Upper lobe of right lung (tissue), 1 donor: ENCODE measurements at regions of chr4 and their contacts with region 1.

Region 1: DNA sequence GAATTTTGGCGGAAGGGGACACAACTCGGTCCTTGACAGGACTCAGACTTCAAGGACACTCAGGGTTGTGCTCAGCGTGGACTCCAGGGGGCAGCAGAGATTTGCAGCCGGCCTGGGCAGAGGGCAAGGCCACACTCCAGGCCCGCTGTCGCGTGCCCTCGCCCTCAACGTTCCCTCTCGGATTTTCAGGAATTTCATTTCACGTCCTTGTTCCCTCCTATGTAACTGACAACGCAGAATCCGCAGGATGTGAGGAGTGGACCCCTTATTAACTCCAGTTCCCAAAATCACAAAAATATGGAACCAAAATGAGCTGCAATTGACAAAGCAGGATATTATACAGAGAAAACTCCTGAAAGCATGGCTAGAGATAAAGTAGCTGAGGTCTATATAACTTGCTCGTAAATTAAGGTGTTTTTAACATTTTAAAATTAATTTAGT is 21.0 kb upstream of the DCTD start:
- DNase-seq: peak; percentile 89
- ATAC-seq: peak; percentile 99
- H3K4me3 ChIP-seq: no peak overlapping the region
- H3K27ac ChIP-seq: no peak overlapping the region
- H3K4me1 ChIP-seq: no peaks in the 10 kb centered on the region
- H3K27me3 ChIP-seq: no peaks in the 10 kb centered on the region
- CTCF ChIP-seq: peak; percentile 90

Region 2: GRCh38 chr4:181933471-181933870 is 1004.8 kb before region 1 on chr4:
- intact Hi-C with region 1: no loop called
- DNase-seq: no peak
- ATAC-seq: no peak
- H3K4me3 ChIP-seq: no peak overlapping the region
- H3K27ac ChIP-seq: no peak overlapping the region
- H3K4me1 ChIP-seq: no peaks in the 10 kb centered on the region
- H3K27me3 ChIP-seq: no peaks in the 10 kb centered on the region
- CTCF ChIP-seq: no peak

Region 3: DNA sequence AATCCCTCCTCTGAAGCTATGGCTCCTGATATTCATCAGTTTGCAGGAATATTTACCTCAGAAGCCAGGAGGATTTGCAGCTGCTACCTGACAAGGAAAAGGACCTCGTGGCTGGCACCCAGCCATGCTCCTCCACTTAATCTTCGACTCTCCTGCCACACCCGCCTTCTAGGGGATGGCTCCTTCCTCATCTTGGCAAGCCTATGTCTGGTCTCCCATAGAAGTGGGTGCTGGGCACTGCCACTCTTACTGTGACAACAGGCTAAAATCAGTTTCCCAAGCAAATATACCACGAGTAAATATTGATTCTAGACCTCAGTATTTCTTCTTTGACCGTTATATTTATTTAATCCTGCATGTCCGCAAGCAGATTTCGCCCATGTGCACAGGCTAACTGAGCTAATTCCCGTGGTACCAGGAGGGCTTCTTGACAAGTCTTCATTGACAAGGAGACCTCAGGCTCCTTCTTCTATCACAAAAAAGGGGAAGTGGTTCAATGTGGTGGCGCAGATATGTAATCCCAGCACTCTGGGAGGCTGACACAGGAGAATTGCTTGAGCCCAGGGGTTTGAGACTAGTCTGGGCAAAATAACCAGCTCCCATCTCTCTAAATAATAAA is 31.5 kb after region 1 on chr4:
- intact Hi-C with region 1: no loop called
- DNase-seq: no peak
- ATAC-seq: no peak
- H3K4me3 ChIP-seq: no peak overlapping the region
- H3K27ac ChIP-seq: no peak overlapping the region
- H3K4me1 ChIP-seq: no peaks in the 10 kb centered on the region
- H3K27me3 ChIP-seq: no peaks in the 10 kb centered on the region
- CTCF ChIP-seq: no peak

Region 4: GRCh38 chr4:183059797-183060196 is 121.6 kb after region 1 on chr4:
- intact Hi-C with region 1: loop called (anchors 10 kb)
- DNase-seq: no peak
- ATAC-seq: no peak
- H3K4me3 ChIP-seq: no peak overlapping the region
- H3K27ac ChIP-seq: no peak overlapping the region
- H3K4me1 ChIP-seq: no peaks in the 10 kb centered on the region
- H3K27me3 ChIP-seq: no peaks in the 10 kb centered on the region
- CTCF ChIP-seq: no peak

Region 5: DNA sequence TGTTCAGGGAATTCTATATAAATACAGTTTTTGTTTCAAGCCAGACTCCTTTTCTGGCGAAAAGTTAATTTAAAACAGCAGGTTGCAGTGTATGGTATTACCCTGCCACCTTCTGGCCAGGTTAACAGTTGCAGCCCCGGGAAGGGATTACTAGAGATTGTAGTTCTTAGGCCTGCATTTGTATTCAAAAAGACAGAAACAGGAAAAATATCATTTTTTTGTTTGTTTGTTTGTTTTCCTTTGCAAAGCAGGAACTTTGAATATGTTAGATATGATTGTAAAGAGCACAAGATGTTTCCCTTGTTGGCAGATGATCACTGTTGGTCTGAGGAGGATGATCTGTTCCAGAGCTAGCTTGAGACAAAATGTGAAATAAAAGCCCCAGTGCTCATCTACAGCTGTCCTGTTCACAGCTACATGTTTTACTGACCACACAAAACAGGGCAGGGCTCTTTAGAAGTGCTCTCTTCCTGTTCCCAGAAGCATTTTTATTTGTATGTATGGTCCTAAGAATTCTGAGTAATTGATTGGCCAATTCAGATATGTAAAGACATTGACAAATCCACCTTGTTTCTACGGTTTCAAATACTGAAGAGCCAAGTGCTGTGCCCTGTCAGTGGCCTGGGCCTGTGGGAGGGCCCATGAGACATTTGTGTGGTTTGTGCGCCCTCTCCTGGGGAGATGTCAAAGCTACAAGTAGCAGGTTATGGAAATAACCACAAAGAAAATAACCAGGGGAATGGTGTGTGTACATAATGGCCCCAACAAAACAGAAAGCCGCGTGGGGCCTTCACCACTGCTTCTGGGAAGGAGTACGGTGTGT is 323.9 kb after region 1 on chr4:
- intact Hi-C with region 1: loop called (anchors 10 kb)
- DNase-seq: peak; percentile 84
- ATAC-seq: peak; percentile 95
- H3K4me3 ChIP-seq: no peak overlapping the region
- H3K27ac ChIP-seq: peak overlapping the region; percentile 53
- H3K4me1 ChIP-seq: peaks cover 19% of the 10 kb centered on the region
- H3K27me3 ChIP-seq: no peaks in the 10 kb centered on the region
- CTCF ChIP-seq: peak; percentile 74